Sigmoid colon (tissue), 7 donors: ENCODE measurements at regions of chr6 and their contacts with region 1.

Region 1: GRCh38 chr6:35016502-35017321 is 124.4 kb downstream of the TCP11 start:
- DNase-seq: peak; percentile 85
- H3K4me3 ChIP-seq: peak overlapping the region; percentile 46 to 72 (median 59)
- H3K27ac ChIP-seq: peak overlapping the region; percentile 91 to 99 (median 94)
- H3K4me1 ChIP-seq: peaks cover 0 to 54% (median 39%) of the 10 kb centered on the region in 4 donors
- H3K27me3 ChIP-seq: no peaks in the 10 kb centered on the region
- CTCF ChIP-seq: no peak
- EP300 ChIP-seq: peak in 3 of 4 donors; percentile 21 to 49 (median 25)
- POLR2A ChIP-seq: peak in 1 of 2 donors; percentile 19

Region 2: DNA sequence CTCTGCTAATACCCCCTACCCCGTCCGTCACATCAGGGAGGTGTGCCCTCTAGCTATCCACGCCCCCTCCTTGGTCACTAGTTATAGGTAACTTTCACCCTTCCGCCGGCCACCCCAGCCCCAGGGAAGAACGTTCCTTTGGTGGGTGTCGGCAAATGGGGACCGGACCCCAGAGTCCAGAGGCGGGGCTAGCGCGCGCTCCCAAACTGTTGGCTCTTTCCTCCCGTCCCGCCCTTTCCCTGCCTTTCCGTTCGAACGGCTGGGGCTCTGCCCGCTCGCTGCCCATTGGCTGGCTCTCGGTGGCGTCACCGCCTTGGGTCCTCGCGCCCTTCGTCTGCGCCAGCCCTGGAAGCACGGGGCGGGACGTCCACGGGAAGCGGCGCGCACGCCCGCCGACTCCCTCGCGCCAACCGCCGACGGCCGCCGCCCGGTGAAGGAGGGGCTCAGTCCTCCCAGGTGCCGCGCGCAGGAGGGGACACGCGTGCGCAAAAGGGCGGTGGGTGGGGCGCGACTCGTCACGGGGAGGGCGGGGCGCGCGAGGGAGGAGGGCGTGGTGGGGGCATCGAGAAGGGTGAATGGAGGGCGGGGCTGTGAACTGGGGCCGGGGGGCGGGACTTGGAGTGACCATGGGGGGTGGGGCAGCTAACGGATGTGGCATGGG is 1606.5 kb before region 1 on chr6:
- intact Hi-C with region 1: no loop called
- DNase-seq: peak; percentile 99
- H3K4me3 ChIP-seq: peak overlapping the region; percentile 86 to 99 (median 90)
- H3K27ac ChIP-seq: peak overlapping the region; percentile 93 to 100 (median 98)
- H3K4me1 ChIP-seq: peaks cover 0 to 38% (median 23%) of the 10 kb centered on the region in 4 donors
- H3K27me3 ChIP-seq: no peaks in the 10 kb centered on the region
- CTCF ChIP-seq: no peak
- EP300 ChIP-seq: peak in 1 of 4 donors; percentile 56
- POLR2A ChIP-seq: peak in 1 of 2 donors; percentile 71

Region 3: DNA sequence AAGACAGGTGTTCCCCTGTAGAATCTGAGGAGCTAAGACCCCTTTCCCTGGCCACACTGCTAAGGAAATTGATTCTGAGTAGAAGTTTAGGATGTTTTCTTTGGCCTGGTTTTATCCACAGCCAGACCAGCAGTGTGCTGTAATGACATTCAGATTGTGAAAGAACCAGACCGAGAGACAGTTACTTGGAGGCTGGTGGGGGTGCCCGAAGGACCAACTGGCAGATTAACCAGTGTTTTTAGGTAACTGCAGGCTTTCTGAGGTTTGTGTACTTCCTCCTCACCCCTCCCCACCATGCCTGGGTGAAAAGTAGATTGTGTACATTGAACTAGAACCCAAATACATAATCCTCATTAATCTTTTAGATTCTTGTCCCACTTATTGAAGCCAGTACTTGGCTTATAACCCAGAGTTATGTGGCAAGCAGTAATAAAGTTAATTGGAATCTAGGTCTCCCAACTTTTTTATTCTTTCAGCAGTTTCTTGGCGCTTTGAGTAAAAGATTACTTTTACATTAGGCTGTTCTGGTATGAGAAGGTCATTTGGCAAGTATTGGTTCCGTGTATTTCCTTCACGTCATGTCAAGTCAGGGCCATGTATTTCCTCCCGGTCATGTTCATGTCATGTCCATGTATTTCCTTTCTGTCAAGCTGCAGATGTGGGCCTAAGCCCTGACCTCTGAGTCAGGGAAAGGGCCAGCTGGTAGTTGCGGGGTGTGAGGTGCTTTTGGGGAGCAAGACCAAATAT is 30.7 kb after region 1 on chr6:
- intact Hi-C with region 1: loop called (anchors 2 kb)
- DNase-seq: peak; percentile 71
- H3K4me3 ChIP-seq: peak overlapping the region in 1 of 4 donors; percentile 4
- H3K27ac ChIP-seq: peak overlapping the region; percentile 84 to 92 (median 88)
- H3K4me1 ChIP-seq: peaks cover 0 to 100% (median 100%) of the 10 kb centered on the region in 4 donors
- H3K27me3 ChIP-seq: no peaks in the 10 kb centered on the region
- CTCF ChIP-seq: no peak
- EP300 ChIP-seq: no peak
- POLR2A ChIP-seq: no peak

Region 4: GRCh38 chr6:35089935-35090505 is 73.3 kb after region 1 on chr6:
- intact Hi-C with region 1: loop called (anchors 5 kb)
- DNase-seq: peak; percentile 67
- H3K4me3 ChIP-seq: no peak overlapping the region
- H3K27ac ChIP-seq: peak overlapping the region; percentile 67 to 82 (median 78)
- H3K4me1 ChIP-seq: peaks cover 0 to 75% (median 61%) of the 10 kb centered on the region in 4 donors
- H3K27me3 ChIP-seq: no peaks in the 10 kb centered on the region
- CTCF ChIP-seq: no peak
- EP300 ChIP-seq: no peak
- POLR2A ChIP-seq: no peak